ENCODE measurements at regions of chr12 and their contacts with region 1.

Region 1: GRCh38 chr12:92185052-92185451 is 39.4 kb upstream of the BTG1 start:
- DNase-seq: peak; percentile 62
- H3K4me3 Mint-ChIP-seq: peak overlapping the region; percentile 36
- H3K27ac Mint-ChIP-seq: peak overlapping the region; percentile 89
- H3K4me1 Mint-ChIP-seq: peaks cover 64% of the 10 kb centered on the region
- H3K27me3 Mint-ChIP-seq: no peaks in the 10 kb centered on the region

Region 2: DNA sequence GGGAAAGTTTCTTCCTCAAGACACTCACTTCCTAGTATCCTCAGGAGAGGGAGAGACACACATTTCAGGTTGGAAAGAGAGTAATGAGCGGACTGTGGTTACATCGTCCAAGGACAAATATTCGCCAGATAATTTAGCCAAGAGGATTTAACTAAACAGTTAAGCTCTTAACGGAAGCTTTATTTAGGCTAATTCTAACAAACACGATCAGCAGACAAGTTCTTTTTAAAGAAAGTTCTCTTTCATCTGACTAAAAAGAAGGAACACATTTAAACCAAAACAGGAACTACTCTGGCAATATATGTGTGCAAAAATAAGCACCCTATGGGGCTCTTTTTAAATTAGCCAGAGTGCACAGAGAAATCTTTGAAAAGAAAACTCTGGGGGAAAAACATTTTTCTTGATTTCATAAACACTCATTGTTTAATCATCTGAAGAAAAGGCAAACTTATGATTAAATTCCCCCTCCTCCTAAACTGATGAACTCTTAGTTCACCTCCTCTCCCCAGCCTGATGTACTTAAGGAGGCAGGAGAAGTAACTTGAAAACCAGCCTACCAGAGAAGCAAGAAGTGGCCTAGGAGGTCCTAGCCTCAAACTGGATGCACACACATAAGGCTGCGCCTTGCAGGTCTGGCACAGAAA is 26.1 kb before region 1 on chr12:
- CTCF ChIA-PET with region 1: no interaction called
- intact Hi-C with region 1: loop called (anchors 1 kb)
- DNase-seq: no peak
- H3K4me3 Mint-ChIP-seq: peak overlapping the region; percentile 55
- H3K27ac Mint-ChIP-seq: peak overlapping the region; percentile 89
- H3K4me1 Mint-ChIP-seq: peaks cover 72% of the 10 kb centered on the region
- H3K27me3 Mint-ChIP-seq: no peaks in the 10 kb centered on the region

Region 3: DNA sequence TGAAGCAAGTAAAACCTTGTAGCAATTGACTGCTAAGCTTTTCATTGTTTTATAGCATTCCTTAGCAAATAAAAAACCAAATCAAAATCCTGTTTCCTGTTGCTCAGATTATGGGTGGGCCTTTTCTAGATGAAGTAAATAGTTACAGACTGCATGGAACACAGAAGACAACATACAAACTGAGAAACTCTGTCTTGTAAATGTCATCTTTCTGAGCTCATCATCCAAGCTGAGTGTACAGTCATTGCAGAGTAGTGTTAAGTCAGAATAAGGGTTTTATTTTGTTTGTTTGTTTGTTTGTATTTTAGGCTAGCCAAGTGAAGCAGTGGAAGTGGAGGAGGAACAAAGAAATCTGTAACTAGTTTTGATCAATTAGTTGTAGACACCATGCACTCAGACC is 15.0 kb before region 1 on chr12:
- CTCF ChIA-PET with region 1: no interaction called
- intact Hi-C with region 1: loop called (anchors 1 kb)
- DNase-seq: no peak
- H3K4me3 Mint-ChIP-seq: no peak overlapping the region
- H3K27ac Mint-ChIP-seq: no peak overlapping the region
- H3K4me1 Mint-ChIP-seq: peaks cover 39% of the 10 kb centered on the region
- H3K27me3 Mint-ChIP-seq: no peaks in the 10 kb centered on the region

Region 4: GRCh38 chr12:92396647-92397252 is 211.7 kb after region 1 on chr12:
- CTCF ChIA-PET with region 1: no interaction called
- intact Hi-C with region 1: loop called (anchors 2 kb)
- DNase-seq: peak; percentile 39
- H3K4me3 Mint-ChIP-seq: no peak overlapping the region
- H3K27ac Mint-ChIP-seq: peak overlapping the region; percentile 73
- H3K4me1 Mint-ChIP-seq: peaks cover 97% of the 10 kb centered on the region
- H3K27me3 Mint-ChIP-seq: no peaks in the 10 kb centered on the region

Region 5: GRCh38 chr12:92859650-92860386 is 674.8 kb after region 1 on chr12:
- CTCF ChIA-PET with region 1: no interaction called
- intact Hi-C with region 1: no loop called
- DNase-seq: no peak
- H3K4me3 Mint-ChIP-seq: no peak overlapping the region
- H3K27ac Mint-ChIP-seq: no peak overlapping the region
- H3K4me1 Mint-ChIP-seq: peaks cover 4% of the 10 kb centered on the region
- H3K27me3 Mint-ChIP-seq: no peaks in the 10 kb centered on the region